ENCODE measurements at regions of chr6 and their contacts with region 1.

Region 1: DNA sequence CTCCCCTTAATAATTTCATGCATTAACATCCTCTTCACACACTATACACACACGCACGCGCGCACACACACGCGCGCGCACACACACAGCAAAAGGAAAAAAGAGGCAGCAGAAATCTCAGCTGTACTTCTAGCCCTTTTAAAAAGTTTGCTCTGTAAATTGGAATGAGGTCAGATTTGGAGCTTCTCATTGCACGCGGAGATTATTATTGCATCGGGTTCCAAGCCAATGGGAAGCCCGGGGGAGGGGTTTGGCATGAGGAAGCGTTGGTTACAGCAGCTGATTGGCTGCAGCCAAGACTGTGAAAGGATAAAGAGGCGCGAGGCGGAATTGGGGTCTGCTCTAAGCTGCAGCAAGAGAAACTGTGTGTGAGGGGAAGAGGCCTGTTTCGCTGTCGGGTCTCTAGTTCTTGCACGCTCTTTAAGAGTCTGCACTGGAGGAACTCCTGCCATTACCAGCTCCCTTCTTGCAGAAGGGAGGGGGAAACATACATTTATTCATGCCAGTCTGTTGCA is at the start of gene SOX4:
- DNase-seq: peak; percentile 82
- ATAC-seq: peak; percentile 67
- H3K4me3 Mint-ChIP-seq: no peak within 1 kb of the TSS
- H3K27ac Mint-ChIP-seq: peak within 1 kb of the TSS; percentile 77
- H3K4me1 Mint-ChIP-seq: peaks cover 21% of the 10 kb centered on the region
- H3K27me3 Mint-ChIP-seq: peaks cover 37% of the 10 kb centered on the region
- total RNA-seq, gene SOX4: 2.3 to 2.5 TPM

Region 2: GRCh38 chr6:20092071-20092566 is 1501.3 kb before region 1 on chr6:
- CTCF ChIA-PET with region 1: no interaction called
- POLR2A ChIA-PET with region 1: no interaction called
- intact Hi-C with region 1: loop called in 1 of 2 experiments (anchors 2 kb)
- DNase-seq: no peak
- ATAC-seq: peak; percentile 23
- H3K4me3 Mint-ChIP-seq: no peak overlapping the region
- H3K27ac Mint-ChIP-seq: no peak overlapping the region
- H3K4me1 Mint-ChIP-seq: no peaks in the 10 kb centered on the region
- H3K27me3 Mint-ChIP-seq: no peaks in the 10 kb centered on the region

Region 3: GRCh38 chr6:20401205-20402091 is 1192.0 kb before region 1 on chr6 and contains the start of gene E2F3:
- CTCF ChIA-PET with region 1: interaction called, 3 read pairs
- POLR2A ChIA-PET with region 1: interaction called, 3 read pairs
- intact Hi-C with region 1: loop called in 1 of 2 experiments (anchors 2 kb)
- DNase-seq: peak; percentile 99
- ATAC-seq: peak; percentile 84
- H3K4me3 Mint-ChIP-seq: peak within 1 kb of the TSS; percentile 96
- H3K27ac Mint-ChIP-seq: peak within 1 kb of the TSS; percentile 99
- H3K4me1 Mint-ChIP-seq: peaks cover 28% of the 10 kb centered on the region
- H3K27me3 Mint-ChIP-seq: no peaks in the 10 kb centered on the region
- total RNA-seq, gene E2F3: 17.3 to 17.5 TPM

Region 4: GRCh38 chr6:20877008-20877937 is 716.2 kb before region 1 on chr6:
- CTCF ChIA-PET with region 1: interaction called, 4 read pairs
- POLR2A ChIA-PET with region 1: no interaction called
- intact Hi-C with region 1: loop called (anchors 2 to 5 kb)
- DNase-seq: peak; percentile 62
- ATAC-seq: peak; percentile 98
- H3K4me3 Mint-ChIP-seq: no peak overlapping the region
- H3K27ac Mint-ChIP-seq: peak overlapping the region; percentile 74
- H3K4me1 Mint-ChIP-seq: peaks cover 14% of the 10 kb centered on the region
- H3K27me3 Mint-ChIP-seq: no peaks in the 10 kb centered on the region

Region 5: GRCh38 chr6:21666199-21666691 is 72.8 kb after region 1 on chr6:
- CTCF ChIA-PET with region 1: no interaction called
- POLR2A ChIA-PET with region 1: no interaction called
- intact Hi-C with region 1: loop called in 1 of 2 experiments (anchors 2 kb)
- DNase-seq: peak; percentile 35
- ATAC-seq: peak; percentile 50
- H3K4me3 Mint-ChIP-seq: peak overlapping the region; percentile 54
- H3K27ac Mint-ChIP-seq: no peak overlapping the region
- H3K4me1 Mint-ChIP-seq: peaks cover 22% of the 10 kb centered on the region
- H3K27me3 Mint-ChIP-seq: peaks cover 64% of the 10 kb centered on the region

Region 6: GRCh38 chr6:22062807-22063408 is 469.4 kb after region 1 on chr6:
- CTCF ChIA-PET with region 1: no interaction called
- POLR2A ChIA-PET with region 1: no interaction called
- intact Hi-C with region 1: loop called (anchors 2 to 5 kb)
- DNase-seq: peak; percentile 82
- ATAC-seq: peak; percentile 83
- H3K4me3 Mint-ChIP-seq: peak overlapping the region; percentile 43
- H3K27ac Mint-ChIP-seq: peak overlapping the region; percentile 86
- H3K4me1 Mint-ChIP-seq: peaks cover 40% of the 10 kb centered on the region
- H3K27me3 Mint-ChIP-seq: peaks cover 12% of the 10 kb centered on the region